ENCODE measurements at regions of chr22 and their contacts with region 1.

Region 1: GRCh38 chr22:22397277-22397870 is 111.2 kb downstream of the ZNF280B start:
- DNase-seq: no peak
- H3K4me3 ChIP-seq: no peak overlapping the region
- H3K27ac ChIP-seq: no peak overlapping the region
- H3K4me1 ChIP-seq: no peaks in the 10 kb centered on the region
- H3K27me3 ChIP-seq: peaks cover 73 to 100% (median 94%) of the 10 kb centered on the region in 4 experiments
- CTCF ChIP-seq: peak in 1 of 3 experiments; percentile 17; a peak in 1 of 4 replicates
- EP300 ChIP-seq: no peak
- POLR2A ChIP-seq: no peak
- RAD21 ChIP-seq: no peak

Region 2: DNA sequence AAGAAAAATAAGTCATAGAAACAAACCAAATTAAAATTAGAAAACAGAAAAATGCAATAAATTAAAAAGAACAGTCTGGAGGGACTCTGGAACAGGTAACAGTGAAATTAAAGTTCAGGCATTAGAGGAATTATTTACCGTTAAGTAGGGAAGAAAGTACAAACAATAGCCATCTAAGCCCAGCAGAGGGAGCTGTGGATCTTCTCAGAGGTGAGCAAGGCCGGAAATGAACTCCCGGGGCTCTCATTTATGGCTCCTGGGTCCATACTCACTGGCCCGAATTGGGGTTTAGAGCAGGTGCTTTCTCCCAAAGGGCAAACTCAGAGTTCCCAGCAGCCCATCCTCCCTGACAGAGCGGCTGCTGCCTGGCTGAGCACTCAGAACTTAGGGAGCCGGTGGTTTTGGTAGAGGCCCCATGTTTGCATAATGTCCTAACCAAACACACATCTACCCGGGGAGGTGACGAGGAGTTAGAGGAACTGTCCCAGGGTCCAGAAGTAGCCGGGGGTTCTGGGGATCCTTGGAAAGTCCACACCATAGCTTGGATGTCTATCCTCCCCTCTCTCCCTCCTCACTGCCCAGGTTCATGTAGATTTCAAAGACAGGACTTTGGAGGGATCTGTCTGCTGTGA is 240.5 kb before region 1 on chr22:
- CTCF ChIA-PET with region 1: no interaction called
- POLR2A ChIA-PET with region 1: no interaction called
- DNase-seq: peak; percentile 21 to 69
- H3K4me3 ChIP-seq: no peak overlapping the region
- H3K27ac ChIP-seq: no peak overlapping the region
- H3K4me1 ChIP-seq: no peaks in the 10 kb centered on the region
- H3K27me3 ChIP-seq: peaks cover 60 to 79% (median 73%) of the 10 kb centered on the region in 4 experiments
- CTCF ChIP-seq: peak; percentile 46 to 71 (median 70)
- EP300 ChIP-seq: no peak
- POLR2A ChIP-seq: no peak
- RAD21 ChIP-seq: peak; percentile 69 to 71

Region 3: GRCh38 chr22:22408731-22409696 is 11.6 kb after region 1 on chr22:
- CTCF ChIA-PET with region 1: interaction called, 31 read pairs
- POLR2A ChIA-PET with region 1: no interaction called
- DNase-seq: peak in 1 of 2 experiments; percentile 69
- H3K4me3 ChIP-seq: no peak overlapping the region
- H3K27ac ChIP-seq: no peak overlapping the region
- H3K4me1 ChIP-seq: no peaks in the 10 kb centered on the region
- H3K27me3 ChIP-seq: peaks cover 68 to 98% (median 94%) of the 10 kb centered on the region in 4 experiments
- CTCF ChIP-seq: peak; percentile 67 to 81 (median 68)
- EP300 ChIP-seq: no peak
- POLR2A ChIP-seq: no peak
- RAD21 ChIP-seq: peak; percentile 68 to 74

Region 4: GRCh38 chr22:22422629-22423112 is 25.3 kb after region 1 on chr22:
- CTCF ChIA-PET with region 1: interaction called, 17 read pairs
- POLR2A ChIA-PET with region 1: no interaction called
- DNase-seq: peak; percentile 21 to 85
- H3K4me3 ChIP-seq: no peak overlapping the region
- H3K27ac ChIP-seq: no peak overlapping the region
- H3K4me1 ChIP-seq: no peaks in the 10 kb centered on the region; a peak in 1 of 7 replicates
- H3K27me3 ChIP-seq: peaks cover 63 to 93% (median 88%) of the 10 kb centered on the region in 4 experiments
- CTCF ChIP-seq: peak; percentile 52 to 75 (median 72)
- EP300 ChIP-seq: no peak
- POLR2A ChIP-seq: no peak
- RAD21 ChIP-seq: peak; percentile 39 to 49; a peak in 3 of 4 replicates

Region 5: DNA sequence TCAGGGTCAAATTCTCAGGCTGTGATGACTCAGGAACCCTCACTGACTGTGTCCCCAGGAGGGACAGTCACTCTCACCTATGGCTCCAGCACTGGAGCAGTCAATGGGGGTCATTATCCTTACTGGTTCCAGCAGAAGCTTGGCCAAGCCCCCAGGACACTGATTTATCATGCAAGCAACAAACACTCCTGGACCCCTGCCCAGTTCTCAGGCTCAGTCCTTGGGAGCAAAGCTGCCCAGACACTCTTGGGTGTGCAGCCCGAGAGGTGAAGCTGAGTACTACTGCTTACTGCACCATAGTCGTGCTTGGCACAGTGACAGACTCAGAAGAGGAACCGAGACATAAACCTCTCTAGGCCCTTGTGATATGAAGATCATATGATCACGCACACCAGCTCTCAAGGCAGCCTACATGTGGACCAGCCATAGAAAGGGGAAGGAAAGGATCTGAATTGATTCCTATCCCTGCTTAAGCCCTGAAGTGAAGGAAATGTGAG is 53.0 kb after region 1 on chr22:
- CTCF ChIA-PET with region 1: no interaction called
- POLR2A ChIA-PET with region 1: no interaction called
- DNase-seq: no peak
- H3K4me3 ChIP-seq: no peak overlapping the region
- H3K27ac ChIP-seq: no peak overlapping the region
- H3K4me1 ChIP-seq: peaks cover 0 to 2% (median 0%) of the 10 kb centered on the region in 4 experiments; a peak in 1 of 7 replicates
- H3K27me3 ChIP-seq: peaks cover 43 to 95% (median 76%) of the 10 kb centered on the region in 4 experiments
- CTCF ChIP-seq: no peak
- EP300 ChIP-seq: no peak
- POLR2A ChIP-seq: no peak
- RAD21 ChIP-seq: no peak